Activated CD4-positive, alpha-beta T cell treated with anti-CD3 and anti-CD28 coated beads, Interleukin-2, amount 10 ng/mL, durations not matched to agents 7 days and 5 days (primary cell): ENCODE measurements at regions of chr1 and their contacts with region 1.

Region 1: DNA sequence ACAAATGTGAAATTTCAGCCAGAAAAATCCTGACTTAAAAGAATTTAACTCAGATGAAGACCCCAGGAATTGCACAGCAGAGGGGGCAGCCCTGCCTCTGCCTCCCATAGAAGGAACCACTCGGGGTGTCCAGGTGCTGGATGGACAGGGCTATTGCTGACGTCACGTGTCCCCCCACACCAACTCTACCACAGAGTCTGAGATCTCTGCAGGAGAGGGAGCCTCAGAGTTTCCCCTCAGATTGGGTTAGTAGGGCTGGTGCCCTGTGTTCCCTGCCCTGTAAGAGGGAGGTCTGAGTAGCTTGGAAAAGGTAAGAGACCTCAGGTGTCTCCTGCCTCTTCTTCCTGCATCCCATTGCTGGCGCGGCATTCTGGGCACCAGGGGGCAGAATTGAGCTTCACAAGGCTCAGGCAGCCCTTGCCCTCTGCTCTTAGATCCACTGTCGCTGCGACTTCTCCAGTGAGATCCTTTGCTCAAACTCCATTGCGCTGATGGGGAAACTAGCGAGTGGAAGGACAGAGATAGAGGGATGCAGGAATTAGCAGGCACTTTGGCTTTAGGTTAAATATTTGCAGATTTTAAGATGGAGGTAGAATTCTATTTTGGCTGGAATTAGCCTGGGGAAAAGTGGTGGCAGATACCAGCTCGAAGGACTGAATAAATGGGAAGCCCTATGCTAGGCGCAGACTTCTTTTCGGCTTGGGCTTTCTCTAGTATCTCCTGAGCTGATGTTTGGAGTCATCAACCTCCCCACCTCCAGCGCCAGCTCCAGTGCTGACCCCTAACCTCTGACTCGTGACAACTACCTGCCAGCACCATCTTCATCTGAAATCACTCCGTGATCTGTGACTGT is 42.8 kb upstream of the DMBX1 start:
- DNase-seq: peak; percentile 80
- H3K4me3 Mint-ChIP-seq: no peak overlapping the region
- H3K27ac Mint-ChIP-seq: no peak overlapping the region
- H3K4me1 Mint-ChIP-seq: peaks cover 13% of the 10 kb centered on the region
- H3K27me3 Mint-ChIP-seq: peaks cover 60% of the 10 kb centered on the region

Region 2: DNA sequence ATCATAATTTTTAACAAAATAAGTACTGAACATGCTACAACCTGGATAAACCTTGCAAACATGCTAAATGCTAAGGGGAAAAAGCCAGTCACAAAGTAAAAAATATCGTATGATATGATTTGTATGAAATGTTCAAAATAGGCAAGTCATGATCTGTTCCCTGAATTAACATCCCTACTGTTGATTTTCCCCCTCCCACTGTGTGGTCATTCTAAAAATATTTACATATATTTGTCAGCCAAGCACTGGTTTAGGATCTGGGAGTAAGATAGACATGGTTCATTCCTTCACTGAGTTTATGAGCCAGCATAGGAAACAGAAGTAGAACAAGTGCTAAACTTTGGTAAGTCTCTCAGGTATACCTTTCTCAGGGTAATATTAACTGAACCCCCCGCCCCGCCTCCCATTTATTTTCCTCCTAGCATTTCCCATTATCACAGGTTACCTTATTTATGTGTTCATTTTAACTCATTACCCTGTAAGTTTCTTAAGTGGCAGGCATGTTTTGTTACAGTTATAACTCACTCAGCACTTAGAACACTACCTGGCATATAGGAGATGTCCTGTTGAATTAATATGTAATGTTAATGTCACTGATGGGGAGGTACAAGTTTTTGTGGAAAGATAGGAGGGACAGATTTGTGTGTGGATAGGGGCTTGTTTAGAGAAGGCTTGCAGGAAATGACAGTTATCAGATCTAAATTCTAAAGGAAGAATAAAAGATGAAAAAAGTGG is 131.0 kb before region 1 on chr1:
- CTCF ChIA-PET with region 1: no interaction called
- POLR2A ChIA-PET with region 1: no interaction called
- DNase-seq: no peak
- H3K4me3 Mint-ChIP-seq: no peak overlapping the region
- H3K27ac Mint-ChIP-seq: peak overlapping the region; percentile 27
- H3K4me1 Mint-ChIP-seq: no peaks in the 10 kb centered on the region
- H3K27me3 Mint-ChIP-seq: no peaks in the 10 kb centered on the region

Region 3: DNA sequence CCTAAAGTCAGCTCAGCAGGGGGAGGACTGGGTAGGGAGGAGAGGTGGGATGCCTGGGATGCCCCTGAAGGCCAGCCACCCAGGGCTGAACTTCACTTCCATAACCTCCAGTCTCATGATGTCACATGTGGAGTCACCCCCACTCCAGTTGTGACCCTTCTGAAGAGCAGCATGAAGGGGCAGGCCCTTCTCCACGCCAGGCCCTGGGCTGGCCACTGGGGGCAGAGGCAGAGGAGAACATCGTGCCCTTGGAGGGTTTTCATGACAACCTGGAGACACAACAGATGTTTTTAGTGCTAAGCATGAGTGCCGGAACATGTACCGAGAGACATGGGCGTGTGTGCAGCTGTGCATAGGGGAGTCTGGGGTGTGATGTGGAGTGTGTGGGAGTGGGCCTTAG is 15.2 kb before region 1 on chr1:
- CTCF ChIA-PET with region 1: interaction called, 10 read pairs
- POLR2A ChIA-PET with region 1: no interaction called
- DNase-seq: no peak
- H3K4me3 Mint-ChIP-seq: no peak overlapping the region
- H3K27ac Mint-ChIP-seq: no peak overlapping the region
- H3K4me1 Mint-ChIP-seq: no peaks in the 10 kb centered on the region
- H3K27me3 Mint-ChIP-seq: peaks cover 3% of the 10 kb centered on the region

Region 4: DNA sequence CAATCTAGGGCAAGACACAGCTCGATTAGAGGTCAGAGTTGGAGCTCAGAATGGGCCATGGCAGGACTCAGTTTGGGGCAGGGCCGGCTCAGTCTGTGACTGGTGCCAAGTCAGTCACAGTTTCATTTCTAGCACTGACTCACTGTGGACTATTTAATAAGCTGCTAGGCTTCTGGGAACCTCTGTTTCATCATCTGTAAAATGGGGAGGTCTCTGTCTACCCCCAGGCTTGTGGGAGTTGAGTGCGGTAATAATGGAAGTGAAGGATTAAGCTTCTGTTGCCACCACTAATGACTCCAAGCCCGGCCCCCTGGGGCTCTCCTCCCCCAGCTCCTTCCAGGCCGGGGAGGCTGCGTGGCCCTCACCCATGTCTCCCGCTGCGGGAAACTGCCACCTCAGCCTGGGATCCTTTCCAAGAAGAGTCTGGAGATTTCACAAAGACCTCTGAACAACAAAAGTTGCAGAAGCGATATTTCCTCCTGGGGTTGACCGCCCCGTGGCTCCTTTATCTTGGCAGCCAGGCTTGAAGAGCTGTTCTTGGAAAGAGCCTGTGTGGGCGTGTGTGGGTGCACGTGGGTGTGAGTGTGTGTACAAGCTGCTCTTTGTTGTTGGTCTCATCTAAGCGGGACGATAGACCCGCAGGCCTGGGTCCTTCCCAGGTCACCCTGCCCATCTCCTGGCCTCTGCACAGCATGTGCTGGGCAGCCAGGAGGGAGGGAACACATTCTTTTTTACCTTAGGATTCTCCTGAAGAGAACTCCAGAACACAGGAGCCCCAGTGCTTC is 75.5 kb after region 1 on chr1:
- CTCF ChIA-PET with region 1: interaction called, 14 read pairs
- POLR2A ChIA-PET with region 1: no interaction called
- DNase-seq: no peak
- H3K4me3 Mint-ChIP-seq: no peak overlapping the region
- H3K27ac Mint-ChIP-seq: peak overlapping the region; percentile 41
- H3K4me1 Mint-ChIP-seq: peaks cover 15% of the 10 kb centered on the region
- H3K27me3 Mint-ChIP-seq: peaks cover 21% of the 10 kb centered on the region

Region 5: DNA sequence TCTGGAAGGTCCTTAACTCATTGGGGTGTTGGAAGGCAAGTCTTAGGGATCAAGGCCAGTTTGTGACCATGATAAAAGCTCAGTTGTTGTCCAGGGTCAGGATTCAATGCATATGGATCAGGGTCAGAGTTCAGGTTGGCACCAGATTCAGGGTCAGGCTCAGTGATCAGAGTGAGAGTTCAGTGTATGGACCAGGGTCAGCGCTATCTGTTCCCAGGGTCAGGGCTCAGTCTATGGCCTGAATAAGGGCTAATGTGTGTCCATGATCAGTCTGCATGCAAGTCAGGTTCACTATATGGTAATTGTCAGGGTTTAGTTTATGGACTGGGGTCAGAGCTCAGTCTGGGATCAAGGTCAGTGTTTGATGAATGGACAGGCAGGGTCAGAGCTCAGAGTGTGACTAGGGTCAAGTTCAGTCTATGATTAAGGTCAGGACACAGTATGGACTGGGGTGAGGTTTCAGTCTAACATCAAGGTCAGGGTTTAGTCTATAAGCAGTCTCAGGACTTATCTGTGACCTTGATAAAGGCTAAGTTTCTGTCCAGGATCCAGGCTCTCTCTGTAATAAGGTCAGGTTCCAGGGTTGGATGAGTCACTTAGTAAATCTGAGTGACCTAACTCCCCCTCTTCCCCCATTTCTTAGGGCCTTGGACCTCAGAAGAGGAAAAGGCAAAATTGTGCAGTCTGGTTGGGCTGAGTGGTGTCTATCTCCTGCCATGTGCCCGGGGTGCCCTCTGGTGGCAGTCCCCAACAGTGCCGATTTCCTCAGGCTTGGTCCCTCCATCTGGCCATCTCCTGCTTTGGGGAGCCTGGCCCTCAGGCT is 80.8 kb after region 1 on chr1:
- CTCF ChIA-PET with region 1: interaction called, 14 read pairs
- POLR2A ChIA-PET with region 1: no interaction called
- DNase-seq: peak; percentile 79
- H3K4me3 Mint-ChIP-seq: no peak overlapping the region
- H3K27ac Mint-ChIP-seq: no peak overlapping the region
- H3K4me1 Mint-ChIP-seq: peaks cover 19% of the 10 kb centered on the region
- H3K27me3 Mint-ChIP-seq: peaks cover 26% of the 10 kb centered on the region